ENCODE measurements at regions of chr6 and their contacts with region 1.

Region 1: GRCh38 chr6:26270903-26271667 is 93.9 kb upstream of the BTN3A2 start:
- DNase-seq: peak; percentile 91
- H3K4me3 Mint-ChIP-seq: no peak overlapping the region
- H3K27ac Mint-ChIP-seq: no peak overlapping the region
- H3K4me1 Mint-ChIP-seq: peaks cover 32% of the 10 kb centered on the region
- H3K27me3 Mint-ChIP-seq: no peaks in the 10 kb centered on the region

Region 2: DNA sequence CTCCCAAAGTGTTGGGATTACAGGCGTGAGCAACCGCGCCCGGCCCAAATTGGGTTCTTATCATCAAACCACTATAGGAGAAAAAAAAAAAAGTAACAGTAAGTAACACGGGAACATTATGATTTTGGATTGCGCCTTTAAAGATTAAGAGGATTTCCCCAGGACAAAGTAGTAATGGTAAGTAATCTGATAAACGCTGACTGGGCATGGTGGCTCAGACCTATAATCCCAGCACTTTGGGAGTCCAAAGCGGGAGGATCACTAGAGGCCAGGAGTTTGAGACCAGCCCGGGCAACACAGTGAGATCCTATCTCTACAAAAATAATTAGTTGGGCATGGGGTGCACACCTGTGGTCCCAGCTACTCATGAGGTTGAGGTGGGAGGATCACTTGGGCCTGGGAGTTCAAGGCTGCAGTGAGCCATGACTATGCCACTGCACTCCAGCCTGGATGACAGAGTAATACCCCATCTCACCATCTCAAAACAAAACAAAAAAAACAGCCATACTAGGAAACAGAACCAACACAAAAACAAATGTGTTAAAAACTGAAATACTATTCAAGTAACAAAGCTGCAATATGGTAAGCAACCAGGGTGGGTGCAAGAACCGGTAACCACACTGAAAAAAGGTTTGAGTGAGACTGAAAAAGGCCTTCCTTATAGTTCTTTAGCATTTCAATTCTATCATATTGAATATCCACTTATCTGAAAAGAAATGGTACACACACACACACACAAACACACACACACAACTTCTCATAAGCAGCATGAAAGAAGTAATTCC is 1560.4 kb before region 1 on chr6:
- CTCF ChIA-PET with region 1: no interaction called
- POLR2A ChIA-PET with region 1: no interaction called
- DNase-seq: no peak
- H3K4me3 Mint-ChIP-seq: no peak overlapping the region
- H3K27ac Mint-ChIP-seq: no peak overlapping the region
- H3K4me1 Mint-ChIP-seq: peaks cover 51% of the 10 kb centered on the region
- H3K27me3 Mint-ChIP-seq: no peaks in the 10 kb centered on the region

Region 3: DNA sequence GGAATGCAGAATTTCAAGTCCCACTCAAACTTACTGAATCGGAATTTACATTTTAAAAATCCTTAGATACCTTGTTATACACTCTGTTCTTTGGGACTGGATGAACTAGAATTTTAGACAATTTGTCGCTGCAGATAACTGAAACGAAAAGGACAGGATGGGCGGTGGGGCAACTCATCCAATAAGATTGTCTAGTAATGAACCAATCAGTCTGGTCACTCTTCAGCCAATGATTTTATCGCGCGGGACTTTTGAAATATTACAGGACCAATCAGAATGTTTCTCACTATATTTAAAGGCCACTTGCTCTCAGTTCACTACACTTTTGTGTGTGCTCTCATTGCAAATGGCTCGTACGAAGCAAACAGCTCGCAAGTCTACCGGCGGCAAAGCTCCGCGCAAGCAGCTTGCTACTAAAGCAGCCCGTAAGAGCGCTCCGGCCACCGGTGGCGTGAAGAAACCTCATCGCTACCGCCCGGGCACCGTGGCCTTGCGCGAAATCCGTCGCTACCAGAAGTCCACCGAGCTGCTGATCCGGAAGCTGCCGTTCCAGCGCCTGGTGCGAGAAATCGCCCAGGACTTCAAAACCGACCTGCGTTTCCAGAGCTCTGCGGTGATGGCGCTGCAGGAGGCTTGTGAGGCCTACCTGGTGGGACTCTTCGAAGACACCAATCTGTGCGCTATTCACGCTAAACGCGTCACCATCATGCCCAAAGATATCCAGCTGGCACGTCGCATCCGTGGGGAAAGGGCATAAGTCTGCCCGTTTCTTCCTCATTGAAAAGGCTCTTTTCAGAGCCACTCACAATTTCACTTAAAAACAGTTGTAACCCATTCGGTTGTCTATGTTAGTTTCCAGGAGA is 225.8 kb before region 1 on chr6:
- CTCF ChIA-PET with region 1: no interaction called
- POLR2A ChIA-PET with region 1: interaction called, 14 read pairs
- DNase-seq: peak; percentile 93
- H3K4me3 Mint-ChIP-seq: peak overlapping the region; percentile 83
- H3K27ac Mint-ChIP-seq: peak overlapping the region; percentile 99
- H3K4me1 Mint-ChIP-seq: peaks cover 44% of the 10 kb centered on the region
- H3K27me3 Mint-ChIP-seq: no peaks in the 10 kb centered on the region

Region 4: DNA sequence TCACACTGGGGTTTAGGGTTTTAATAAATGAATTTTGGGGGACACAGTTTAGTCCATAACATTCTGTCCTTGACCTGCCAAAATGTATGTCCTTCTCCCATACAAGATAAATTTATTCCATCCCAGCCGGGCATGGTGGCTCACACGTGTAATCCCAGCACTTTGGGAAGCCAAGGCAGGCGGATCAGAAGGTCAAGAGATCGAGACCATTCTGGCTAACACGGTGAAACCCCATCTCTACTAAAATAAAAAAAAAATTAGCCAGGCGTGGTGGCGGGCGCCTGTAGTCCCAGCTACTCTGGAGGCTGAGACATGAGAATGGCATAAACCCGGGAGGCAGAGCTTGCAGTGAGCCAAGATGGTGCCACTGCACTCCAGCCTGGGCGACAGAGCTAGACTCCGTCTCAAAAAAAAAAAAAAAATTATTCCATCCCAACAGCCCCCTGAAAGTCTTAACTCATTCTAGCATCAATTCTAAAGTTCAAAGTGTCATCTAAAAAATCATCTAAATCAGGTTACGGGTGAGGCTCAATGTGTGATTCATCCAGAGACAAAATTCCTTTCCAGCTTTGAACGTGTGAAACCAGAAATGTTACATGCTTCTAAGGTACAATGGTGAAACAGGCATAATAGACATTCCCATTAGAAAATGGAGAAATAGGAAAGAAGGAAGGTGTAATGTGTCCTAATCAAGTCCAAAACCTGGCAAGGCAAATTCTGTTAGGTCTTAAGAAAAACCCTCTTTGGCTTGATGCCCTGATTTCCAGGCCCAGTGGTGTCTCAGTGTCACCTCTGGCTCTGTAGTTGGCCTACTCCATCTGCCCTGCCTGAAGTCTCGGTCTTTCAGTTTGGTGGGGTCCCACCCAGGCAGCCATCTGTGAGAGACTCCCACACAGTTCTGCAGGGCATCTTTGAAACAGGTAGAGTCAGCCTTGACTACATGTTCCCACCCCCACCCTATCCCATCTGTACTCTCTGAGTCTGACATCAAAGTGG is 140.5 kb before region 1 on chr6:
- CTCF ChIA-PET with region 1: no interaction called
- POLR2A ChIA-PET with region 1: no interaction called
- DNase-seq: no peak
- H3K4me3 Mint-ChIP-seq: no peak overlapping the region
- H3K27ac Mint-ChIP-seq: peak overlapping the region; percentile 60
- H3K4me1 Mint-ChIP-seq: peaks cover 39% of the 10 kb centered on the region
- H3K27me3 Mint-ChIP-seq: no peaks in the 10 kb centered on the region

Region 5: GRCh38 chr6:26141378-26141904 is 129.6 kb before region 1 on chr6:
- CTCF ChIA-PET with region 1: no interaction called
- POLR2A ChIA-PET with region 1: no interaction called
- DNase-seq: no peak
- H3K4me3 Mint-ChIP-seq: no peak overlapping the region
- H3K27ac Mint-ChIP-seq: no peak overlapping the region
- H3K4me1 Mint-ChIP-seq: peaks cover 6% of the 10 kb centered on the region
- H3K27me3 Mint-ChIP-seq: no peaks in the 10 kb centered on the region

Region 6: DNA sequence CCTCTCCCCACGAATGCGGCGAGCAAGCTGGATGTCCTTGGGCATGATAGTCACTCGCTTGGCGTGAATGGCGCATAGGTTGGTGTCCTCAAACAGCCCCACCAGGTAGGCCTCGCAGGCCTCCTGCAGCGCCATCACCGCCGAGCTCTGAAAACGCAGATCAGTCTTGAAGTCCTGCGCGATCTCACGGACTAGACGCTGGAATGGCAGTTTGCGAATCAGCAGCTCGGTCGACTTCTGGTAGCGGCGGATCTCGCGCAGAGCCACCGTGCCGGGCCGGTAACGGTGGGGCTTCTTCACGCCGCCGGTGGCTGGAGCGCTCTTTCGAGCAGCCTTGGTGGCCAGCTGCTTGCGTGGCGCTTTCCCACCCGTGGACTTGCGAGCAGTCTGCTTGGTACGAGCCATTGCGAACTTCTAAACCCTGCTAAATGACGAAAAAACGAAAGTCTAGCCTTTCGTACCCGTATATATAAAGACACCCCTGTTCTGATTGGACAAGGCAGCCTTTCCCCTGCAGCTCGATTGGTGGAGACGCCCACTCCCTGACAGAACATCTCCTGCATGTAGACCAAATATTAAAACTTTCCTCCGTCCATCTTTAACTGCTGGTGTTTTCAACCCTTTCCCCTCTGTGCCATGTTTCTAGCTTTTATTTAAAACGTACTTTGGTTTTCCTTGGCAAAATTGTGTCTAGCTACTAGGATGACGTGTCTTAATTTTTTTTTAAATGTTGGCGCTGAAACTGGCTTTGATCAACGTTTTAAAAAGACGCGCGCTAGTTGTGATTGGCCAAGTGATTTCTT is 74.0 kb before region 1 on chr6:
- CTCF ChIA-PET with region 1: interaction called, 3 read pairs
- POLR2A ChIA-PET with region 1: interaction called, 63 read pairs
- DNase-seq: peak; percentile 91
- H3K4me3 Mint-ChIP-seq: peak overlapping the region; percentile 99
- H3K27ac Mint-ChIP-seq: peak overlapping the region; percentile 98
- H3K4me1 Mint-ChIP-seq: peaks cover 44% of the 10 kb centered on the region
- H3K27me3 Mint-ChIP-seq: no peaks in the 10 kb centered on the region

Region 7: DNA sequence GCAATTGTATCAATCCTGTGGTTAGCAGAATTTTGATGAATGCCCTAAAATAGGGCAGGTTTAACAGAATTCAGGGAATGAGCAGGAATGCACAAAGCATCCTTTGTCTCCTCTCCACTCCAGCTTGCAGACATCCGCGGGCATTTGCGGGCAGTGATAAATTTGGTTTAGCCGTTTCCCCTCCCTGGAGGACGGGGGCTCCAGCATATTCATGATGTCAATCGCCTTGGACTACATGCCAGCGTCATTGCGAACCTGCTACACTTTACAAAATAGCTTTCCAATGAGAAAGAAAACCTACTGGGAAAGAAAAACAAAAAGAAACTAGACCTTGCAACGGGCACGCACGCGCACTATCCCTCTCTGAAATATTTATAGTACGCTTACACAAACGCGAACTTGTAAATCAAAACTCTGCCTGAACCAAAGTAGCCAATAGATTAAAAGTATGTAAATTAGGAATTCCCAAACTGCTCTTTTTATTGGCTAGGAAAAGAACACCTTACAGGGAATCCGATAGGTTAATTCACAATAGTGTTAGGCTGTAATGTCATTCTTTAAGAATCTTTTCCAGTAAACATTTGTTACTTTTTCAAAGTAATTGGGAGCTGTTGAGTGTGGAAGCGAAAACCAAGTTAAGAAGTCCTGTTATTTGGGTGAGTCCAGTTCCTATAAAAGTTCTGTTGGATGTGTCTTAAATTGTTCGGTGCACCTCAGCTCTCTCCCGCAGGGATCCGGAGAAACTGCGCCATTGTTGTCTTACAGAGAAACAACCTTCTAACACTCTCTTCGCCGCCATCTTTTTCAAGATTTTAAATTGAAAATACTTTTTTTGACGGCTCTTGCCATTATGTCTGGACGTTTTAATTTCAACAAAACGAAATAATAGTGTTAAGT is 47.2 kb before region 1 on chr6:
- CTCF ChIA-PET with region 1: no interaction called
- POLR2A ChIA-PET with region 1: no interaction called
- DNase-seq: peak; percentile 82
- H3K4me3 Mint-ChIP-seq: no peak overlapping the region
- H3K27ac Mint-ChIP-seq: no peak overlapping the region
- H3K4me1 Mint-ChIP-seq: peaks cover 43% of the 10 kb centered on the region
- H3K27me3 Mint-ChIP-seq: no peaks in the 10 kb centered on the region

Region 8: DNA sequence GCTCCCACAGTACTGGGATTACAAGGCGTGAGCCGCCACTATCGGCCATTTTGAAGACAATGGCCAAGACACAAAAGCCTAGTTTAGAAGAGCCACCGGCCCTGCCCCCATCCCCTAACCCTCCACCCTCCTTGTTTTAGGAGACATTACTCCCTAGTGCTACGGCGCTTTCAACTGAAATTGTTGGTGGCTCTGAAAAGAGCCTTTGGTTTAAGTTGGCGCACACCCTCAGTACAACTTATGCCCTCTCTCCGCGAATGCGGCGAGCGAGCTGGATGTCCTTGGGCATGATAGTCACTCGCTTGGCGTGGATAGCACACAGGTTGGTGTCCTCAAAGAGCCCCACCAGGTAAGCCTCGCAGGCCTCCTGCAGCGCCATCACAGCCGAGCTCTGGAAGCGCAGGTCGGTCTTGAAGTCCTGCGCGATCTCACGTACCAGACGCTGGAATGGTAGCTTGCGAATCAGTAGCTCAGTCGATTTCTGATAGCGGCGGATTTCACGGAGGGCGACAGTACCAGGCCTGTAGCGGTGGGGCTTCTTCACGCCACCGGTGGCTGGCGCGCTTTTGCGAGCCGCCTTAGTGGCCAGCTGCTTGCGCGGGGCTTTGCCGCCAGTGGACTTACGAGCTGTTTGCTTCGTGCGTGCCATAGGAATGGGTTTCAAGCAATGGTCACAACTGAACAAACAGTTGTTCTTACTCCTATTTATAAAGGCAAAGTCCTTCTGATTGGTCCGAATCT is 21.0 kb before region 1 on chr6:
- CTCF ChIA-PET with region 1: interaction called, 25 read pairs
- POLR2A ChIA-PET with region 1: interaction called, 10 read pairs
- DNase-seq: peak; percentile 82
- H3K4me3 Mint-ChIP-seq: peak overlapping the region; percentile 98
- H3K27ac Mint-ChIP-seq: peak overlapping the region; percentile 100
- H3K4me1 Mint-ChIP-seq: peaks cover 40% of the 10 kb centered on the region
- H3K27me3 Mint-ChIP-seq: no peaks in the 10 kb centered on the region

Region 9: DNA sequence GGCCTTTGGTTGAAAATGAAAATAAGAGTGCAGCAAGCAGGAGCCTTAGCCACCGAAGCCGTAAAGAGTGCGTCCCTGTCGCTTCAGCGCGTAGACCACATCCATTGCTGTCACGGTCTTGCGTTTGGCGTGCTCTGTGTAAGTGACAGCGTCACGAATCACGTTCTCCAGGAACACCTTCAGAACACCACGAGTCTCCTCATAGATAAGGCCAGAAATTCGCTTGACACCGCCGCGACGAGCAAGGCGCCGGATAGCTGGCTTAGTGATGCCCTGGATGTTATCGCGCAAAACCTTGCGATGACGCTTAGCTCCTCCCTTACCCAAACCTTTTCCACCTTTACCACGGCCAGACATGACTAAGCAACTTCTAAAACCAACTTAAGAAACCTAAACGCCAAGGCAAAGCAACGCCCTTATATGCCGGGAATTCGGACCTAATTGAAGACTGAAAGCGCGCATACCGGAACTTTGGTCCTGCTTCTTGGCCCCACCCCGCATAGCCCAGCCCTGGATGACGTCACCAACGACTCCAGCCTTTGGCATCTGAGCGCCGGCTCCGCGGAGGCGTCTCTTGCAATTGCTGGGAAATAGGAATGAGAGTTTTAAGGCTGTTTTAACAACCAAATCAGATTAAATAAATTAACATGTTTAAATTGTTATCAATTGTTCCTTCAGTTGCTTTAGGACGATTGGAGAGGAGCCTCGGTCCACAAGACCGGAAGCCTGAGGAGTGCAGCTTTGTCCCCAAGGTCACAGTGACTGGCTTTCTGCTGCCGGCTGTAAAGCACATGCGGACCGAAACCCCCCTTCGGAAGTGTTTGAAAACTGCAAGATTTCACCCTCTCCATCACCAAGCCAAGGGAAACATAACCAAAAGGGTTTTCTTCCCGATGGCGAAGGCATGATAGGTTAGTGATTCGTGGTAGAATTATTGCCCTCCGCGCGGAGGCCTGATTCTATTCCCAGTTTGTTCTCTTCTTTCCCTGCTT is 14.4 kb after region 1 on chr6:
- CTCF ChIA-PET with region 1: interaction called, 42 read pairs
- POLR2A ChIA-PET with region 1: interaction called, 56 read pairs
- DNase-seq: peak; percentile 99
- H3K4me3 Mint-ChIP-seq: peak overlapping the region; percentile 92
- H3K27ac Mint-ChIP-seq: peak overlapping the region; percentile 100
- H3K4me1 Mint-ChIP-seq: peaks cover 38% of the 10 kb centered on the region
- H3K27me3 Mint-ChIP-seq: peaks cover 2% of the 10 kb centered on the region

Region 10: DNA sequence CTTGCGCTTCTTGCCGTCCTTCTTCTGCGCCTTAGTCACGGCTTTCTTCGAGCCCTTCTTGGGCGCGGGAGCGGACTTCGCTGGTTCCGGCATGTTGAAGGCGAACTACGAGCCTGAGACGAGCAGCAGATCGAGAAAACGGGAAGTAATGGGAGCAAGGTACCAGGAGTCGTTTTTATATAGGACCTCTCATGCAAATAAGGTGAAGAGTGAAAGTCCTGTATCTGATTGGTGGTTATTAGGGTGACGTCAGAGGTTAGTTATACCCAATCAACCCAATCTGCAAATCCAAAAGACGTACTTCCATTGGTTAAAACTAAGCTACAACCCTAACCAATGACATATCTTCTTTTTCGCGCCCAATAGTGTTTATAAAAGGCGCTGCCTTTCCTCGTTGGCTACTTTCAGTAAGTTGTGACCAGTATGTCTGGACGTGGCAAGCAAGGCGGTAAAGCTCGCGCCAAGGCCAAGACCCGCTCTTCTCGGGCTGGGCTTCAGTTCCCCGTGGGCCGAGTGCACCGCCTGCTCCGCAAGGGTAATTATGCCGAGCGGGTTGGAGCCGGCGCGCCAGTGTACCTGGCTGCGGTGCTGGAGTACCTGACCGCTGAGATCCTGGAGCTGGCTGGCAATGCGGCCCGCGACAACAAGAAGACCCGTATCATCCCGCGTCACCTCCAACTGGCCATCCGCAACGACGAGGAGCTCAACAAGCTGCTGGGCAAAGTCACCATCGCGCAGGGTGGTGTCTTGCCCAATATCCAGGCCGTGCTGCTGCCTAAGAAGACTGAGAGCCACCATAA is 875.8 kb after region 1 on chr6:
- CTCF ChIA-PET with region 1: no interaction called
- POLR2A ChIA-PET with region 1: interaction called, 15 read pairs
- DNase-seq: peak; percentile 88
- H3K4me3 Mint-ChIP-seq: no peak overlapping the region
- H3K27ac Mint-ChIP-seq: no peak overlapping the region
- H3K4me1 Mint-ChIP-seq: peaks cover 24% of the 10 kb centered on the region
- H3K27me3 Mint-ChIP-seq: no peaks in the 10 kb centered on the region